IMR-90 (cell line): ENCODE measurements at regions of chr17 and their contacts with region 1.

Region 1: DNA sequence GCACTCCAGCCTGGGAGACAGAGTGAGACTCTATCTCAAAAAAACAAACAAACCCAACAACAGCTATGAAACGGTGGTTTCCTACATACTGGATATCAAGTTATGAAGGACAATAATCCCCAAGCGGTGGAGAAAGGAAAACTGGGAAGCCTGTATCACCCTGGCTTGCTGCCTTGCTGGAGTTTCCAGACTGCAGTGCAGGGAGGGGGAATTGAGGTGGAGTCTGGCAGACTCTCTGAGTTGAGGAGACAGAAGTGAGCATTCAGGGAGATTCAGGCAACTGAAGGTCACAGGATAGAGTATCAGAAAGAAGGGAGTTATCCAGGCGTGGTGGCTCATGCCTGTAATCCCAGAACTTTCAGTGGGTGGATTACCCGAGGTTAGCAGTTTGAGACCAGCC is 11.9 kb downstream of the QRICH2 start:
- DNase-seq: no peak
- ATAC-seq: no peak; the same call in 1 of the 2 replicates
- H3K4me3 ChIP-seq: no peak overlapping the region
- H3K27ac ChIP-seq: no peak overlapping the region
- H3K4me1 ChIP-seq: no peaks in the 10 kb centered on the region
- H3K27me3 ChIP-seq: no peaks in the 10 kb centered on the region
- CTCF ChIP-seq: no peak
- POLR2A ChIP-seq: no peak
- RAD21 ChIP-seq: no peak

Region 2: GRCh38 chr17:76005263-76006149 is 290.7 kb before region 1 on chr17:
- CTCF ChIA-PET with region 1: no interaction called
- POLR2A ChIA-PET with region 1: no interaction called
- dilution Hi-C with region 1: no loop called
- in situ Hi-C with region 1: loop called (anchors 10 kb)
- intact Hi-C with region 1: loop called (anchors 5 kb)
- DNase-seq: peak; percentile 63
- ATAC-seq: peak; percentile 78
- H3K4me3 ChIP-seq: no peak overlapping the region
- H3K27ac ChIP-seq: 0 out of 2 replicates have a peak overlapping the region, but pooled peaks have one; percentile 5
- H3K4me1 ChIP-seq: peaks cover 7% of the 10 kb centered on the region
- H3K27me3 ChIP-seq: no peaks in the 10 kb centered on the region
- CTCF ChIP-seq: peak; percentile 76
- POLR2A ChIP-seq: no peak
- RAD21 ChIP-seq: peak; percentile 75

Region 3: GRCh38 chr17:76014184-76014924 is 281.8 kb before region 1 on chr17:
- CTCF ChIA-PET with region 1: interaction called, 4 read pairs
- POLR2A ChIA-PET with region 1: no interaction called
- dilution Hi-C with region 1: no loop called
- in situ Hi-C with region 1: loop called (anchors 10 kb)
- intact Hi-C with region 1: loop called (anchors 5 kb)
- DNase-seq: peak; percentile 58
- ATAC-seq: peak; percentile 99
- H3K4me3 ChIP-seq: no peak overlapping the region
- H3K27ac ChIP-seq: no peak overlapping the region
- H3K4me1 ChIP-seq: peaks cover 7% of the 10 kb centered on the region
- H3K27me3 ChIP-seq: peaks cover 22% of the 10 kb centered on the region; the same call in 1 of the 2 replicates
- CTCF ChIP-seq: peak; percentile 82
- POLR2A ChIP-seq: no peak
- RAD21 ChIP-seq: peak; percentile 79